ENCODE measurements at regions of chr2 and their contacts with region 1.

Region 1: DNA sequence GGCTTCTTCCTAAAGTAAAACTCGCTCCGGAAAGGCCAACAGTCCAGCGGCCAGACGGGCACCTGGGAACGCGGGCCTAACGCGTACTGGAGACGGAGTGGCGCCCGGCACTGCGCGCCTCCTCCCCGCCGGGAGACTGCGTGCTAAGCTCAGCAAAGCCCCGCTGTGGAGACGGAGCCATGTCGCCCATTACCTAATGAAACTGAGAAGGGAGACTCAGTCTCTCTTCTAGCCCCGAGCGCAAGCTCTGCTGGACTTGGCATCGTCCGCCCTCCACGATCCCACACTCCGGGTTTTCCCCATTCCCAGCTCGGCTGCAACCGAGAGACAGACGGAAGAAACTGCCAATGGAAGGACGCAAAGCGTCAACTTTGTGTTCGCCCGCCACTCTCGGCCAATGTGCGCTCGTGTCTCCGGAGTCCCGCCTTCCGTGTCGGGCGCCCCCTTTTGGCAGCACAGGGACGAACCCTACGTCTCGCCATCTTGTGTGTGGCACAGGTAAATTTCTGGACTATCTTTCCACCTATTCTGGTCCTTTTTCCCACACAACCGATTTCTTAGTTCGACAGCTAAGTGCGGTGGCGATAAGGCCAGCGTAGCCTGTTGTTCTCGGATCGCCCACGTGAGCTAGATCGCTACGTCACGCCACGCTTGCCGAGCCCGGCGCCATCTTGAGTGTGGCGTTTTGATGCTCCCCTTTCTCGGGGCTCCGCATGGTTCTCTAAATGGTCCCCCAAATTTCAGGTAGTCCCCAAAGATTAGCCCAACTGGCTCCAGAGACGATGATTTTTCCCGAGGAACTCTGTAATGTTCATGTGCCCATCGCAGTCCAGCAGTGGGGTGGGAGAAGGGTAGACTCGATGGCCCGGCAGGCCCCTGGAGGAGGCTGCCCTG is 1.3 kb upstream of the PTMA start:
- DNase-seq: peak; percentile 97
- H3K4me3 Mint-ChIP-seq: peak overlapping the region; percentile 91
- H3K27ac Mint-ChIP-seq: peak overlapping the region; percentile 100
- H3K4me1 Mint-ChIP-seq: peaks cover 20% of the 10 kb centered on the region
- H3K27me3 Mint-ChIP-seq: no peaks in the 10 kb centered on the region

Region 2: GRCh38 chr2:231642631-231643494 is 64.1 kb before region 1 on chr2:
- CTCF ChIA-PET with region 1: interaction called, 5 read pairs
- POLR2A ChIA-PET with region 1: interaction called, 11 read pairs
- DNase-seq: peak; percentile 66
- H3K4me3 Mint-ChIP-seq: peak overlapping the region; percentile 64
- H3K27ac Mint-ChIP-seq: peak overlapping the region; percentile 71
- H3K4me1 Mint-ChIP-seq: peaks cover 19% of the 10 kb centered on the region
- H3K27me3 Mint-ChIP-seq: no peaks in the 10 kb centered on the region

Region 3: DNA sequence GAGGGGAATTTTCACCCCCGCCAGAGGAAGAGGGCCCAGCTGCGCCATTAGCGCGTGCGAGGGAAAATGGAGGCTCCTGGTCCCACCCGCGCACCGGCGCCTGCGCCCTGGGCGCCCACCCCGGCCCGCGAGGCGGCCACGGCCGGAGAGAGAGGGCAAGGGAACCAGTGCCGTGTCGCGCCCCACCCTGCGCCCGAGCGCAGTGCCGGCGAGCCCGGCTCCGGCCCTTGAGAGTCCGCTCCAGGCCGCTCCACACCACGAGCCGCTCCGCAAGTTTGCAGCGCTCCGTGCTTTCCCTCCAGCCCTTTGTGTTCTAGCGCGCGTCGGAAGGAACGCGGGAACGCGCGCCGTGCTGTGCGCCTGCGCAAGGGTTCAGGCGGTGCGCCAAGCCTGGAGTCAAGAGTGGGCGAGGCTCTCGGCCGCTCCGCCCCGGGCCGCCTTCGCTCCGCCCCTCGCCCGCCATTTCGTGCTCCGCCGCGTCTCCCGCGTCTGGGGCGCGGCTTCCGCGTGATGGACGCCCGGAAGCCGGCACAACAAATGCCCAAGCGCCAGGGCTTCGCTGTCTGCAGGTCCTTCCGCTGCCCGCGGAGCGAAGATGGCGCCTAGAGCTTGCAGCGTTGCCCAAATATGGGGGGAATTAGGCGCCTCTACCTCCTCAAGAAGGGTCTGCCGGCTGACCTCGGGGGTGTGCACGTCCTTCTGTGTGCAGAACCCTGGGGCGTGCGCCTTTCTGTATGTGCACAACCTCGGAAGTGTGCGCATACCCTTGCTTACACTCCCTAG is 44.8 kb before region 1 on chr2:
- CTCF ChIA-PET with region 1: interaction called, 15 read pairs
- POLR2A ChIA-PET with region 1: interaction called, 34 read pairs
- DNase-seq: peak; percentile 98
- H3K4me3 Mint-ChIP-seq: peak overlapping the region; percentile 73
- H3K27ac Mint-ChIP-seq: peak overlapping the region; percentile 90
- H3K4me1 Mint-ChIP-seq: peaks cover 31% of the 10 kb centered on the region
- H3K27me3 Mint-ChIP-seq: no peaks in the 10 kb centered on the region

Region 4: GRCh38 chr2:231687133-231687852 is 19.7 kb before region 1 on chr2:
- CTCF ChIA-PET with region 1: interaction called, 55 read pairs
- POLR2A ChIA-PET with region 1: interaction called, 141 read pairs
- DNase-seq: peak; percentile 56
- H3K4me3 Mint-ChIP-seq: no peak overlapping the region
- H3K27ac Mint-ChIP-seq: no peak overlapping the region
- H3K4me1 Mint-ChIP-seq: peaks cover 1% of the 10 kb centered on the region
- H3K27me3 Mint-ChIP-seq: peaks cover 5% of the 10 kb centered on the region

Region 5: GRCh38 chr2:231696007-231696371 is 11.0 kb before region 1 on chr2:
- CTCF ChIA-PET with region 1: interaction called, 55 read pairs
- POLR2A ChIA-PET with region 1: interaction called, 15 read pairs
- DNase-seq: no peak
- H3K4me3 Mint-ChIP-seq: no peak overlapping the region
- H3K27ac Mint-ChIP-seq: no peak overlapping the region
- H3K4me1 Mint-ChIP-seq: no peaks in the 10 kb centered on the region
- H3K27me3 Mint-ChIP-seq: no peaks in the 10 kb centered on the region

Region 6: GRCh38 chr2:231732604-231733003 is 25.6 kb after region 1 on chr2:
- CTCF ChIA-PET with region 1: no interaction called
- POLR2A ChIA-PET with region 1: no interaction called
- DNase-seq: no peak
- H3K4me3 Mint-ChIP-seq: no peak overlapping the region
- H3K27ac Mint-ChIP-seq: no peak overlapping the region
- H3K4me1 Mint-ChIP-seq: no peaks in the 10 kb centered on the region
- H3K27me3 Mint-ChIP-seq: no peaks in the 10 kb centered on the region

Region 7: DNA sequence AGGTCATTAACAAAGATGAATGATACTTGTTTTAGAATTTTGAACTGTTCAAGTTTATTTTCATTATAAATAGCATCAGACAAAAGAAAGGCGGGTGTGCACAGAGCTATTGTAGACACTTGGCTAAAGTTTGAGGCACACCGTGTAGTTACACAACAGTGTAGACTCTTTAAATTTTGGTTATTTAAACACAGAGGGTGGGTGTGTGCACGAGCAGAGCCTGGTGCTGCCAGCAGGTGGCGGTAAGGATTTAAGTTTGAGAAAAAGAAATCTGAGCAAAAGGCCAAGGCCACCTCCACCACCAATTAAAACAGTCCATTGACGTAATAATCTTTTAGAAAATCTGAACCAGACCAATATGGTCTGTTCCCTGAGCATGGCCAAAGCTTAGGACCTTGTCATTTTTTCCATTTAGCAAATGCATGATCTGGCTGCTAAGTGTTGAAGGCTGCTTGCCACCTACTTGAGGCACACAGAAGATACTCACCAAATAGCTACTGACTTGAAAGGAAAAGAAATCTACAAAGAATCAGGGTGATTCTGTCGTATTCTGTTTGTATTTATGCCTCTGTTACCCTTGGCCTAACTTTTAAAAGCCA is 93.6 kb after region 1 on chr2:
- CTCF ChIA-PET with region 1: no interaction called
- POLR2A ChIA-PET with region 1: no interaction called
- DNase-seq: peak; percentile 55
- H3K4me3 Mint-ChIP-seq: no peak overlapping the region
- H3K27ac Mint-ChIP-seq: no peak overlapping the region
- H3K4me1 Mint-ChIP-seq: peaks cover 4% of the 10 kb centered on the region
- H3K27me3 Mint-ChIP-seq: no peaks in the 10 kb centered on the region

Region 8: DNA sequence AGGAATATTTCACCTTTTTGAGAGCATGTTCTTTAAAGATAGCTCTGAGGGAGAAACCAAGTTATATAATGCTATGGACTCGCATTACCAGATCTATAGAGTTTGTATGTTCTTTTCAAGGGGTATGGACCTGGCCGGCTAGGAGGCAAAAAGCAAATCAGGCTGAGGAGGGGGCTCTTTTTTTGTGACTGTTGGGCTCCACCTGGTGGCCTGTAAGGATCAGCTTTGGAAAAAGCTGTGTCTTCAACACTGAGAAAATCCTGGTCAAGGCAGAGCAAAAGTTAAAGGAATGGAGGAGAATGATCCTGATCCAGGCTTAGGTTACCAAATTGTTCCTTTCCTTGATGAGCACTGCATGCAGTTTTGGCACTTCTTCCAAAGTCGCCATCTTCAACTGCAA is 435.1 kb after region 1 on chr2:
- CTCF ChIA-PET with region 1: no interaction called
- POLR2A ChIA-PET with region 1: no interaction called
- DNase-seq: peak; percentile 32
- H3K4me3 Mint-ChIP-seq: no peak overlapping the region
- H3K27ac Mint-ChIP-seq: no peak overlapping the region
- H3K4me1 Mint-ChIP-seq: peaks cover 12% of the 10 kb centered on the region
- H3K27me3 Mint-ChIP-seq: no peaks in the 10 kb centered on the region

Measured in activated CD4-positive, alpha-beta memory T cell treated with anti-CD3 and anti-CD28 coated beads, Interleukin-2, amount 10 ng/mL, durations not matched to agents 7 days and 5 days (primary cell).